Heart left ventricle (tissue), 16 donors: ENCODE measurements at regions of chr22 and their contacts with region 1.

Region 1: DNA sequence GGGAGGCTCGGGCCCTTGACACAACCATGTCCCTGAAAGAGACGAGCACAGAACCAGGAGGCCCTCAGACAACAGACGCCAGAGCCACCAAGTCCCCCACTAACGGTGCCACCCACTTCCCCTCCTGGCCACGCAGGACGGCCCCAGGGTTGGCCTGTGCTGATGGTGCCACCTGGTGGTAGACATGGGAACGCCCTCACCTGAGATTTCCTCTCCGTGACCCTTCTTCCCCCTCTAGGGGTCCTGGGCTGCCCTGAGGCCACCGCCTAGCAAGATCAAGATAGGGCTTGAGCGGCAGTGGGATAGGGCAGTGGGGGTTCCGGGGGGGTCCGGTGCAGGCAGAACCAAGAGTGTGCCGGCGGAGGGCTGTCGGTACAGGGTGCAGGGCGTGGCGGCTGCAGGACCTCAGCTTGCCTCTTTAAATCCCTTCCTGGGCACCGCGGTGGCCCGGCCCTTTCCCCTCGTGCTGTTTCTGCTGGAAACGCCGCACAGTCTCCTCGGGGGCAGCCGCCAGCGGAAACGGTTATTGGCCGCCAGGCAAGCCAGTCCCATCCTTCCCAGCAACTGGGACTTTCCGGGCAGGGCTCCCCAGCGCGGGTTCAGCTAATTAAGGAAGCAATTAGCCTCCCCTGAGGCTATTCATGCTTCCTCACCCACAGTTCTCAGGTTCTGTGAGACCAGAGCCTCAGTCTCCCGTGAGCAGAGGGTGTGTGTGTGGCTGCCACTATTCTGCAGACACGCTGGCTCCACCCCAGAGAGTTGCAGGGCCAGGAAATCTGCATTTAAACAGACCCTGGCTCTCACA is 5.5 kb upstream of the NFAM1 start:
- DNase-seq: peak; percentile 72 to 90 (median 78)
- ATAC-seq: peak; percentile 72 to 85 (median 84)
- H3K4me3 ChIP-seq: peak overlapping the region in 11 of 12 donors; percentile 3 to 57 (median 49)
- H3K27ac ChIP-seq: peak overlapping the region in 2 of 12 donors; percentile 12 to 66
- H3K4me1 ChIP-seq: peaks cover 0 to 76% (median 16%) of the 10 kb centered on the region in 12 donors
- H3K27me3 ChIP-seq: peaks cover 0 to 25% (median 3%) of the 10 kb centered on the region in 9 donors
- CTCF ChIP-seq: peak; percentile 86 to 98 (median 96)
- POLR2A ChIP-seq: no peak

Region 2: DNA sequence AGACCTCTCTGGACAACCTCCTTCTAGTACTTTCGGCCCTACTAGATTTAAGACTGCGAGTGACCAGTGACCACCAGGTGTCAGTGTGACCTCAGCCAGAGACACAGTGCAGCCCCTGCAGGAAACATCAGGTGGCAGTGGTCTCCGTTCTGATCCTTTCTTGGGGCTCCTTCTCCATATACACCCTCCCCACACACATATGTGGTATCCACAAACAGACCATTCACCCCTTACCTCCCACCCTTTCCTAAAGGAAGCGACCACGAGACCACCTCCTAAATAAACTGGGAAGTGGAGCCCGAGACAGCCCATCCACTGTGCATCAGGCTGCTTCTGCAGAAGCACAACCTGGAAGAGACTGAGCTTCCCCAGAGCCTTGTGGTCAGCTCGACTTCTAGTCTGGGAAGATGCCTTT is 268.6 kb before region 1 on chr22:
- intact Hi-C with region 1: loop called (anchors 1 to 2 kb)
- DNase-seq: peak; percentile 44 to 75 (median 68)
- ATAC-seq: peak in 3 of 4 donors; percentile 78 to 84 (median 84)
- H3K4me3 ChIP-seq: no peak overlapping the region
- H3K27ac ChIP-seq: no peak overlapping the region
- H3K4me1 ChIP-seq: peaks cover 0 to 15% (median 0%) of the 10 kb centered on the region in 12 donors
- H3K27me3 ChIP-seq: no peaks in the 10 kb centered on the region
- CTCF ChIP-seq: peak; percentile 70 to 98 (median 84)
- POLR2A ChIP-seq: no peak

Region 3: GRCh38 chr22:42283278-42284201 is 154.2 kb before region 1 on chr22:
- intact Hi-C with region 1: loop called in 3 of 10 experiments (anchors 5 to 10 kb)
- DNase-seq: peak in 2 of 5 donors; percentile 25 to 61
- ATAC-seq: peak in 1 of 4 donors; percentile 36
- H3K4me3 ChIP-seq: peak overlapping the region in 11 of 12 donors; percentile 11 to 50 (median 32)
- H3K27ac ChIP-seq: no peak overlapping the region
- H3K4me1 ChIP-seq: peaks cover 0 to 15% (median 7%) of the 10 kb centered on the region in 12 donors
- H3K27me3 ChIP-seq: peaks cover 0 to 53% (median 23%) of the 10 kb centered on the region in 9 donors
- CTCF ChIP-seq: no peak
- POLR2A ChIP-seq: no peak